IMR-90 (cell line): ENCODE measurements at regions of chr9 and their contacts with region 1.

Region 1: DNA sequence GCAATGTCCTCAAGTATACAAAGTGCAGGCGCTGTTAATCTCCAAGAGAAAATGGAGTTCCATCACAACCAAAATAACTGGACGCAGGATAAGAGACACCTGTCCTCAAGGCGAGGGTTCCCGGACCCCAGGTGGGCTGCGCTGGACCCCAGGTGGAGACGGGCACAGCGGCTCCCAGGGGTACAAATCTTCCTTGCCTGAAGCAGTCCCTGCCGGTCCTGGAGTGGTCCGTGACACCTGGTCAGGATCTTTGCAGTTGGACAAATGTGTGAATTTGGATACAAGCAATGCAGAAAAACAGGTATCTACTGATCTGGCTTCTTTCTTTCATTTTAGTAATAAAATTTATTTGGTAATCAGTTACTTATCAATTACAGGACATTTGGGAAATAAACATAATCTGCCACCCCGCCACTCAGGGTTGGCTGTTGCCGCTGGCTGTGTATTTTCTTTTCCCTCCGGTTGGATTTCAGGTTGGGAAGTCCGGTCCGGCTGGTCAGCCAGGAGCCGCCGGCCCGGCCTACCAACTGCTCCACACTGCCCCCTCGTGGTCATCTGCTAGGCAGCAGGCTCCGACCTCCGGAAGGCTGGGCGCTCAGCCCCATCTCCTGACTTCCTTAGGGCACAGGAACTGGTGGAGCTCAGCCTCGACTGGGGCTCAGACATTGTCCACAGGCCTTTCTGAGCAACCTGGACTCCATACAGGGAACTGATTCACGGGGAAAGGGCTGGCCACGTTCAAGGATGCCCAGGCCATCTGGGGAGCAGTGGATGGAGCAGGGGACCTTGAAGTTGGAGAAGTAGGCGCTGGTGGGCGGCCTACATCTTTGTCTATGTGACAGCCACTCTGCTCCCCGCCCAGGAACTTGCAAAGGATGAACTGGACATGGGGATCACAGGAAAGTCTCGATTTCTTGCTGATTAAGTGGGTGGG is 43.4 kb downstream of the NXNL2 start:
- DNase-seq: peak; percentile 69
- ATAC-seq: peak; percentile 92
- H3K4me3 ChIP-seq: no peak overlapping the region
- H3K27ac ChIP-seq: 0 out of 2 replicates have a peak overlapping the region, but pooled peaks have one; percentile 21
- H3K4me1 ChIP-seq: peaks cover 4% of the 10 kb centered on the region; the same call in 1 of the 2 replicates
- H3K27me3 ChIP-seq: no peaks in the 10 kb centered on the region
- CTCF ChIP-seq: peak; percentile 95
- POLR2A ChIP-seq: no peak
- RAD21 ChIP-seq: peak; percentile 95

Region 2: DNA sequence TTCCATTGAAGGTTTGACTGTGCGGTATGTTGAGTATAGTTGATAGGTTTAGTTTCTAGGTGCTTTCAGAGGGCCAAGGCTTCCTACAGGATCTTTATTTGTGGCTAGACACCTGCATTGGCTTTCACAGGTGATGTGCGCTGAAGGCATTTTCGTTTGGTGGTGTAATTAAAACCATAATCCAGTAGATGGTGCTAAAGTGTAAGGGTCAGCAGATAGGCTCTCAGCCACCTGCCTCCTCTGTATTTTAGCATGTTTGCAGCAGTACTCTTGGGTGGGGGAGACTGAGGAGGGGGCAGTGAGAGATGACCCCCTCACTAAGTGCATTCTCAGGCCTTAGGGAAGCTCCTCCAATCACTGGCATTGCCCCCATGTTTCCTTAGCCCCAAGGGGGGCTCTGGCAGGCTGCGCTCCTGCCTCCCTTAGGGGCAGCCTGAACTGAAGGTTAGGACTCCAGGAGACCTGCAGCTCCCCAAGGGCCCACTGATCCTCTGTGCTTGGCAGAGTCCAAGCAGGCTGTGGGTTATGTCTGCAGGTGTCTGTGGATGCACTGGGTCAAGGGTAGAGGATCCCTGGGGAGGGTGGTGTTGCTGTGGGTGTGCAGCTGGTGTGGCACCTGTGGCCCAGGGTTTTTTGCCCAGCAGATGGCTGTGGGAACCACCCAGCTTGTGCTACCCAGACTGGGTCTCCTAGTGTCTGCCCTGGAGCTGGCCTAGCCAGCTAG is 627.5 kb before region 1 on chr9:
- CTCF ChIA-PET with region 1: no interaction called
- POLR2A ChIA-PET with region 1: no interaction called
- dilution Hi-C with region 1: no loop called
- in situ Hi-C with region 1: no loop called
- intact Hi-C with region 1: loop called (anchors 5 kb)
- DNase-seq: peak; percentile 34
- ATAC-seq: peak; percentile 77
- H3K4me3 ChIP-seq: no peak overlapping the region
- H3K27ac ChIP-seq: no peak overlapping the region
- H3K4me1 ChIP-seq: no peaks in the 10 kb centered on the region
- H3K27me3 ChIP-seq: peaks cover 5% of the 10 kb centered on the region
- CTCF ChIP-seq: peak; percentile 61
- POLR2A ChIP-seq: no peak
- RAD21 ChIP-seq: peak; percentile 82

Region 3: DNA sequence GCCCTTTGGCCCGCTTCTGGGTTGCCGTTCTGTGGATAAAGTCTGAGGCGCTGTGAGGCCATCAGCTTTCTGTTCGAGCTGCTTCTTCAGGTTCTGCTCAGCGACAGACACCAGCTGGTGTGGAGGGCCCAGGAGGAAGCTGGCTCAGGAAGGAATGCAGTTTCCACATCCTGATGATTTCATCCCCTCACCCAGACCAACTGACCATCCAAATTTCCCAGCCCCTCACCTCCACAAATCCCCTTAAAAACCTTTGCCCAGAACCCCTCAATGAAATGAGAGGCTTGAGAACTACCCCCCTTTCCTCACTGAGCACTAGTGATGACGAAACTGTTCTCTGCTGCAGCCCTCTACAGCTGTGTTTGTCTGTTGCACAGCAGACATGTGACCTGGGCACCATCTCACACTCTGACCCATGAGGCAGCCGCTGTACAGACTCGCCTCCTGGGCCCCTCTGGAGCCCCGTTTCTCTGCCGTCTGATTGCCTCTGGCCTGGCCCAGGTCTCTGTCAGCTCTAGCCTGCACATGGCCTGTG is 485.5 kb before region 1 on chr9:
- CTCF ChIA-PET with region 1: interaction called, 3 read pairs
- POLR2A ChIA-PET with region 1: interaction called, 5 read pairs
- dilution Hi-C with region 1: no loop called
- in situ Hi-C with region 1: loop called (anchors 10 kb)
- intact Hi-C with region 1: no loop called
- DNase-seq: peak; percentile 68
- ATAC-seq: peak; percentile 92
- H3K4me3 ChIP-seq: no peak overlapping the region
- H3K27ac ChIP-seq: peak overlapping the region; percentile 6; the same call in 1 of the 2 replicates
- H3K4me1 ChIP-seq: peaks cover 4% of the 10 kb centered on the region; the same call in 1 of the 2 replicates
- H3K27me3 ChIP-seq: no peaks in the 10 kb centered on the region; the same call in 1 of the 2 replicates
- CTCF ChIP-seq: no peak
- POLR2A ChIP-seq: no peak
- RAD21 ChIP-seq: no peak

Region 4: GRCh38 chr9:88173378-88173999 is 404.9 kb before region 1 on chr9:
- CTCF ChIA-PET with region 1: no interaction called
- POLR2A ChIA-PET with region 1: no interaction called
- dilution Hi-C with region 1: no loop called
- in situ Hi-C with region 1: loop called (anchors 10 kb)
- intact Hi-C with region 1: loop called (anchors 1 kb)
- DNase-seq: peak; percentile 73
- ATAC-seq: peak; percentile 65; the same call in 1 of the 2 replicates
- H3K4me3 ChIP-seq: no peak overlapping the region
- H3K27ac ChIP-seq: no peak overlapping the region
- H3K4me1 ChIP-seq: no peaks in the 10 kb centered on the region
- H3K27me3 ChIP-seq: peaks cover 7% of the 10 kb centered on the region; the same call in 1 of the 2 replicates
- CTCF ChIP-seq: peak; percentile 99
- POLR2A ChIP-seq: no peak
- RAD21 ChIP-seq: peak; percentile 77

Region 5: DNA sequence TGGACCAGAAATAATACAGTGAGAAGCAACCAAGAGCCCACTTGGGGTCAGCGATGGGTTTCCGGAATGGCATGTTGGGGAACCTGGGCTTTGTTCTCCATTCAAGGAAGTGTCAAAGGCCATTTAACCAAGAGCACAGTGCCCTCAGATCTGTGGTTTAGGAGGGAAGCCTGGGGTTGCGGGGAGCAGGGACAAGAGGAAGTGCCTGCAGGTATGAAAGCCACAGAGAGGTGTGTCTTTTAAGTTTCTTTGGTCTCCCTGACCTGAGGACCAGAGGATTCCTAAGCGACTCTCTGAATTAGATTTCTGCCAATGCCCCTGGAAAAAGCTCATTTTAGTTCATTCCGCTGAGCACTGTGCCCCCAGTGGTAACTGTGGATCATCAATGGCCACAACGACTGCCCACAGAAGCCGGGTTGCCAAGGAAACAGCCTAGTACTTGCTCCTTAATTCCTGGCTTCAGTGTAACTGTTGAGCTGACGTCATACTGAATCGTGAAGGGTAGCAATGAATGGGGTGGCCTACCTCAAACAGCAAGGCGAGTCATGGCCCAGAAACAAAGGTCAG is 297.5 kb before region 1 on chr9:
- CTCF ChIA-PET with region 1: no interaction called
- POLR2A ChIA-PET with region 1: no interaction called
- dilution Hi-C with region 1: no loop called
- in situ Hi-C with region 1: no loop called
- intact Hi-C with region 1: loop called (anchors 10 kb)
- DNase-seq: peak; percentile 76
- ATAC-seq: peak; percentile 21; the same call in 1 of the 2 replicates
- H3K4me3 ChIP-seq: no peak overlapping the region
- H3K27ac ChIP-seq: no peak overlapping the region
- H3K4me1 ChIP-seq: no peaks in the 10 kb centered on the region
- H3K27me3 ChIP-seq: no peaks in the 10 kb centered on the region
- CTCF ChIP-seq: no peak; the same call in 1 of the 2 replicates
- POLR2A ChIP-seq: no peak
- RAD21 ChIP-seq: no peak

Region 6: DNA sequence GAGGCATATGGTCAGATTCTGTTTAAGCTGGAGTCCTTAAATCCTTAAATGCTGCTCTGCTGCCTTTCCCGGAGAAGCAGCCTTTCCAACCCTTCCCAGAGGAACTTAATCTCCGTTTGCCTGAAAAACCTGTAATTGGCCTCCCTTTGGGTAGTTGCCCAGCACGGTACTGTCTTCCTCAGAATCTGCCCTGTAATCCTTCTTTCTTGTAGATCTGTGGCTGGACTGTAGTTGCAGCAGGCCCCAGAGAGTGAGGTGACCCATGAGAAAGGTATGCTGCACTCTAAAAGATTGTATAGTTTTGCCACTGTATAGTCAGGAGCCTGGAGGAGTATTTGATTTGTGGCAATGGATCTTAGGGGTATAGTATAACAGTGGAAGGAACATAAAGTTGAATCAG is 178.4 kb before region 1 on chr9:
- CTCF ChIA-PET with region 1: no interaction called
- POLR2A ChIA-PET with region 1: no interaction called
- dilution Hi-C with region 1: no loop called
- in situ Hi-C with region 1: loop called (anchors 10 kb)
- intact Hi-C with region 1: no loop called
- DNase-seq: peak; percentile 92
- ATAC-seq: peak; percentile 79
- H3K4me3 ChIP-seq: no peak overlapping the region
- H3K27ac ChIP-seq: peak overlapping the region; percentile 91
- H3K4me1 ChIP-seq: peaks cover 19% of the 10 kb centered on the region
- H3K27me3 ChIP-seq: no peaks in the 10 kb centered on the region
- CTCF ChIP-seq: no peak
- POLR2A ChIP-seq: no peak
- RAD21 ChIP-seq: no peak

Region 7: GRCh38 chr9:88897081-88897480 is 318.7 kb after region 1 on chr9:
- CTCF ChIA-PET with region 1: no interaction called
- POLR2A ChIA-PET with region 1: no interaction called
- dilution Hi-C with region 1: no loop called
- in situ Hi-C with region 1: no loop called
- intact Hi-C with region 1: no loop called
- DNase-seq: no peak
- ATAC-seq: no peak
- H3K4me3 ChIP-seq: no peak overlapping the region
- H3K27ac ChIP-seq: no peak overlapping the region
- H3K4me1 ChIP-seq: no peaks in the 10 kb centered on the region
- H3K27me3 ChIP-seq: peaks cover 8% of the 10 kb centered on the region
- CTCF ChIP-seq: no peak
- POLR2A ChIP-seq: no peak
- RAD21 ChIP-seq: no peak